GM23248 (cell line): ENCODE measurements at regions of chr2 and their contacts with region 1.

Region 1: GRCh38 chr2:55010149-55010591 is 40.1 kb downstream of the RTN4 start:
- DNase-seq: peak; percentile 87
- H3K4me3 ChIP-seq: peak overlapping the region; percentile 61
- H3K27ac ChIP-seq: peak overlapping the region; percentile 61
- H3K4me1 ChIP-seq: peaks cover 99% of the 10 kb centered on the region
- H3K27me3 ChIP-seq: no peaks in the 10 kb centered on the region

Region 2: DNA sequence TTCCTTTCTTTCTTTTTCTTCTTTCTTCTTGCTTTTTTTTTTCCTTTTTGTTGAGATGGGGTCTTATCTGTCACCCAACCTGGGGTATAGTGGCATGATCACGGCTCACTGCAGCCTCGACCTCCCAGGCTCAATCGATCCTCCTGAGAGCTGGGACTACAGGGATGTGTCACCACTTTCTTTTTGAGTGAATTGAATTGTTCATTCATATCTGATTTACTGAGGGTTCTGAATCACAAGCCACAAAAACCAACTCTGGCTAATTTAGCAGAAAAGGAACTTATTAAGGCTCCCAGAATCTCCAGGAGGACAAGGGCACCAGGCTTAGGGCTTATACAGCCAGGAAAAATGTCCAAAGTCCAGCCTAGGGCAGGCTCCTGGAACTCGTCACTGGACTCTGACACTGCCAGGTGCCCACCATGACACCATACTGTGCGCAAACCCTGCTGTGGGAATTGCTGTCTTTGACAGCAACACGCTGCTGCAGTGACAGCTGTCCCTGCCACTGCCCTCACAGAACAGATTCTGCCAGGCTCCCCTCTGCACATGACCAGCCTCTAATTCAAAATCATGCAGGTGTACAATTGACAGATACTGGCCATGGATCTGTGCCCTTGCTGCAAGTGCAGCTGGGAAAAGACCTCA is 329.7 kb before region 1 on chr2:
- in situ Hi-C with region 1: no loop called
- DNase-seq: peak; percentile 68
- H3K4me3 ChIP-seq: peak overlapping the region; percentile 17; the same call in 1 of the 2 replicates
- H3K27ac ChIP-seq: no peak overlapping the region
- H3K4me1 ChIP-seq: peaks cover 21% of the 10 kb centered on the region
- H3K27me3 ChIP-seq: peaks cover 5% of the 10 kb centered on the region; the same call in 1 of the 2 replicates

Region 3: GRCh38 chr2:55175254-55176025 is 165.3 kb after region 1 on chr2:
- in situ Hi-C with region 1: loop called (anchors 10 kb)
- DNase-seq: peak; percentile 93
- H3K4me3 ChIP-seq: no peak overlapping the region
- H3K27ac ChIP-seq: no peak overlapping the region
- H3K4me1 ChIP-seq: peaks cover 4% of the 10 kb centered on the region; the same call in 1 of the 2 replicates
- H3K27me3 ChIP-seq: no peaks in the 10 kb centered on the region